Esophagus muscularis mucosa (tissue), 4 donors: ENCODE measurements at regions of chr2 and their contacts with region 1.

Region 1: DNA sequence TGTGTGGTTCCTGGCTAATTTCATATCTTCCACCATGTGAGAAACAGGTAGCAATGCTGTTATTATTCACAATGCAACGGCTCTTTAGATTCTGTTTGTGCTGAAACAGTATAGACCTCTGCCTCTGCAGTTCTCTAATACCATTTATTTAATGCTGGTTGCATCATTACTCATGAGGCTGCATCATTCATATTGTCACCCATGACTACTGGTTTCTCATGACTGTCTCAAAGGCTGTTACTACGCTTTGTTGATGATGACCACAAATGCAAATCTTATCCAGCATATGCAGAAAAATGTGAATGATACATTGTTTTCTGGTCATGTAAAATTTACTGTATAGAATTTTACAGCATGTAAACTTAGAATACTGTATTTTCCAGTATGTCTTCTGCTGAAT is 22.5 kb downstream of the CAVIN2 start:
- DNase-seq: no peak
- H3K4me3 ChIP-seq: no peak overlapping the region
- H3K27ac ChIP-seq: no peak overlapping the region
- H3K4me1 ChIP-seq: no peaks in the 10 kb centered on the region
- H3K27me3 ChIP-seq: no peaks in the 10 kb centered on the region
- CTCF ChIP-seq: no peak
- EP300 ChIP-seq: no peak
- POLR2A ChIP-seq: no peak

Region 2: GRCh38 chr2:191521608-191522208 is 302.7 kb before region 1 on chr2:
- intact Hi-C with region 1: no loop called
- DNase-seq: no peak
- H3K4me3 ChIP-seq: no peak overlapping the region
- H3K27ac ChIP-seq: no peak overlapping the region
- H3K4me1 ChIP-seq: no peaks in the 10 kb centered on the region
- H3K27me3 ChIP-seq: no peaks in the 10 kb centered on the region
- CTCF ChIP-seq: peak; percentile 69 to 83 (median 75)
- EP300 ChIP-seq: no peak
- POLR2A ChIP-seq: no peak

Region 3: DNA sequence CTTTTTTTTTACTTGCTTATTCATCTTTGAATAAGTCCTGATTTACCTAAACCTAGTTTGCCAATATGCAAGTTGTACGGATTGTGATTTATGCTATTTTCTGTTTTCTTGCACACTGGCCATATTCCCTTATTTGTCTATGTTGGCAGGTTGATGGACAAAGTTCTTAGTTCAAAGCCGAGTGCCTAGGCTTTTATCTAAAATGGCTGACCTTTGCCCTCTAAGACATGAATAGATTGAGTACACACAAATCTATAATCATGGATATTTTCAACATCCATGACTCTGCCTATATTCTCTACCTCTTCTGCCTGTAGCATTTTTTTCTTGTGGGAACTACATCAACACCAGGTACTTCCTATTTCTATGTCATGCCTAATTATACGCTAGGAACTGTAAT is 198.6 kb after region 1 on chr2:
- intact Hi-C with region 1: loop called (anchors 5 kb)
- DNase-seq: no peak
- H3K4me3 ChIP-seq: no peak overlapping the region
- H3K27ac ChIP-seq: no peak overlapping the region
- H3K4me1 ChIP-seq: peaks cover 4 to 19% (median 15%) of the 10 kb centered on the region in 4 donors
- H3K27me3 ChIP-seq: no peaks in the 10 kb centered on the region
- CTCF ChIP-seq: no peak
- EP300 ChIP-seq: no peak
- POLR2A ChIP-seq: no peak